Heart right ventricle (tissue), 16 donors: ENCODE measurements at regions of chr5 and their contacts with region 1.

Region 1: GRCh38 chr5:178146020-178146820 is 7.5 kb downstream of the NHP2 start:
- DNase-seq: peak; percentile 48 to 51
- ATAC-seq: peak; percentile 26 to 59 (median 44)
- H3K4me3 ChIP-seq: no peak overlapping the region
- H3K27ac ChIP-seq: no peak overlapping the region
- H3K4me1 ChIP-seq: peaks cover 0 to 16% (median 8%) of the 10 kb centered on the region in 9 donors
- H3K27me3 ChIP-seq: no peaks in the 10 kb centered on the region
- CTCF ChIP-seq: peak; percentile 44 to 76 (median 69)

Region 2: DNA sequence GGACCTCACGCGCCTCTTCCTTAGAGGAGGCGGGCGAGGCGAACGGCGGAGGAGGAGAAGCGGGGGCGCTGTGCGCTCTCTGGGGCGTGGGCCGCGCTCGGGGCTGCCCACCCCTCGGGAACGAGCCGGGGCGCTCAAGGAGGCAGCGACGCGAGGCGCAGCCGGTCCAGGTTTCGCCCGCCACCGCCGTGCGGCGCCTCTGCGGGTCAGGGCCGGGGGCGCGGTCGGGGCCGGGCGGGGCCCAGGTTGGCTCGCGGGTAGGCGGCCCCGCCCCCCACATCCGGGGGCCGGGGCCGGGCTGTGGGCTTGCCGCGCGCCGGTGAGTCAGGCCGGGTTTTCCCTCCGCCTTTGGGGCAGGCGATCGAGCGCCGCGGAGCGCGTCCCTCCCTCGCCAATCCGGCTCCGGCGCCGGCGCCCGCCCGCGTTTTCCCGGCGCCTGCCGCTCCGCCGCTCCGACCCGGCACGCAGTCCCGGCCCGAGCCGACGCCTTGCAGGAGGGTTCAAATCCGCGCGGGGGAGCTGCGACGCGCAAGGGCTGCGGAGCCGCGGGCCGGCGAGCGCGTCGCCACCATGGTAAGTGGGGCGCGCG is 32.9 kb before region 1 on chr5 and contains the start of gene N4BP3:
- intact Hi-C with region 1: loop called in 3 of 10 experiments (anchors 5 kb)
- DNase-seq: peak; percentile 57 to 60
- ATAC-seq: peak; percentile 60 to 85 (median 67)
- H3K4me3 ChIP-seq: peak within 1 kb of the TSS; percentile 52 to 70 (median 62)
- H3K27ac ChIP-seq: peak within 1 kb of the TSS; percentile 43 to 86 (median 80)
- H3K4me1 ChIP-seq: peaks cover 9 to 55% (median 40%) of the 10 kb centered on the region in 9 donors
- H3K27me3 ChIP-seq: peaks cover 0 to 60% (median 40%) of the 10 kb centered on the region in 7 donors
- CTCF ChIP-seq: peak in 1 of 9 donors; percentile 3
- total RNA-seq, gene N4BP3: 1.1 to 5.5 (median 2.5) TPM